ENCODE measurements at regions of chr2 and their contacts with region 1.

Region 1: DNA sequence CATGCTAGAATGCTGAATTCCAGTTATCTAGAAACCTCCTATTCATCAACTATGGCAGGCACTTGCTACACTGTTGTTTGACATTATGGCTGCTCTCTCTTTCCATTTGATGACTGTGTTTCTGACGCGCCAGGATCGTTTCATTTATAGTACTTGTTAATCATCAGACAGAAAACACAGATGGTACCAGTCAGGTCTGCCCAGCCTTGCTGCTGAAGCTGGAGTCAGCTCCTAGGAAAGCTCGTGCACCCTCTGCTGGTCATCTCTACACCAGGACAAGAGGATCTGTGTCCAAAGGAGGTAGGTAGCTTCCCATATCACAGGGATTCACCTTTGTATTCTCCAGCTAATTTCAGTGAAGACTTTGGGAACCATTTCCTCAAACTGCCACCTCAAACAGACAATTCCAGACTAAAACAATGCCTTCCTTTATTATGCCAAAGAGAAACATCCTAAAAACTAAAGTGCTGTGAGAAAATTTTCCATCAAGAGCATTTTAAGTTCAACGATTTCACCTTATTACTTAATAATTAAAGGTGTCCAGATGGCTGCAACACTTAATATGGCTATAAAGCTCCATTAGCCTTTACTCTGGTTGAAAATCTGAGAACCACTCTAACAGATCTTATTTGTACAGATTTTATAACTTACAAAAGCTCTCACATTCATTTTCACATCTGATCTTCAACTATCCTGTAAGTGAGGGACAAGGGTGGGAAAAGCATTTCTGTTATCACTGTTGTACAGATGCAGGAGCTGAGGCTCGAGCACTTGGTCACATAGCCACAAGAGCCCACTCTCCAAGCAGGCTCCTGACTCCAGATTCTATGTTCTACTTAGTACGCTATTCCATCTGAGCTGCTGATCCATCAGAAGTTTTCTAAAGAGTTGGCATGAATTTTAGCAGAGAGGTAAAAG is 17.5 kb downstream of the METTL8 start:
- DNase-seq: peak; percentile 74
- H3K4me3 ChIP-seq: peak overlapping the region; percentile 17 to 42; a peak in 3 of 4 replicates
- H3K27ac ChIP-seq: peak overlapping the region; percentile 56 to 82
- H3K4me1 ChIP-seq: peaks cover 0 to 17% of the 10 kb centered on the region in 2 experiments; a peak in 2 of 4 replicates
- H3K27me3 ChIP-seq: no peaks in the 10 kb centered on the region
- CTCF ChIP-seq: peak; percentile 91
- EP300 ChIP-seq: no peak
- RAD21 ChIP-seq: peak; percentile 94

Region 2: GRCh38 chr2:170966648-170967436 is 449.4 kb before region 1 on chr2:
- CTCF ChIA-PET with region 1: interaction called, 70 read pairs
- POLR2A ChIA-PET with region 1: interaction called, 9 read pairs
- DNase-seq: peak; percentile 65
- H3K4me3 ChIP-seq: no peak overlapping the region
- H3K27ac ChIP-seq: no peak overlapping the region
- H3K4me1 ChIP-seq: peaks cover 0 to 9% of the 10 kb centered on the region in 2 experiments; a peak in 1 of 4 replicates
- H3K27me3 ChIP-seq: no peaks in the 10 kb centered on the region
- CTCF ChIP-seq: peak; percentile 39; the same call in 1 of the 2 replicates
- EP300 ChIP-seq: no peak
- RAD21 ChIP-seq: no peak

Region 3: GRCh38 chr2:170973492-170974303 is 442.6 kb before region 1 on chr2:
- CTCF ChIA-PET with region 1: interaction called, 70 read pairs
- POLR2A ChIA-PET with region 1: interaction called, 9 read pairs
- DNase-seq: peak; percentile 99
- H3K4me3 ChIP-seq: peak overlapping the region; percentile 69 to 72
- H3K27ac ChIP-seq: peak overlapping the region; percentile 47 to 91; a peak in 3 of 4 replicates
- H3K4me1 ChIP-seq: peaks cover 5 to 14% of the 10 kb centered on the region in 2 experiments; a peak in 2 of 4 replicates
- H3K27me3 ChIP-seq: no peaks in the 10 kb centered on the region
- CTCF ChIP-seq: peak; percentile 85
- EP300 ChIP-seq: 0 out of 4 replicates have a peak, but pooled peaks of 1 of the 2 experiments have one; percentile 7
- RAD21 ChIP-seq: peak; percentile 85

Region 4: DNA sequence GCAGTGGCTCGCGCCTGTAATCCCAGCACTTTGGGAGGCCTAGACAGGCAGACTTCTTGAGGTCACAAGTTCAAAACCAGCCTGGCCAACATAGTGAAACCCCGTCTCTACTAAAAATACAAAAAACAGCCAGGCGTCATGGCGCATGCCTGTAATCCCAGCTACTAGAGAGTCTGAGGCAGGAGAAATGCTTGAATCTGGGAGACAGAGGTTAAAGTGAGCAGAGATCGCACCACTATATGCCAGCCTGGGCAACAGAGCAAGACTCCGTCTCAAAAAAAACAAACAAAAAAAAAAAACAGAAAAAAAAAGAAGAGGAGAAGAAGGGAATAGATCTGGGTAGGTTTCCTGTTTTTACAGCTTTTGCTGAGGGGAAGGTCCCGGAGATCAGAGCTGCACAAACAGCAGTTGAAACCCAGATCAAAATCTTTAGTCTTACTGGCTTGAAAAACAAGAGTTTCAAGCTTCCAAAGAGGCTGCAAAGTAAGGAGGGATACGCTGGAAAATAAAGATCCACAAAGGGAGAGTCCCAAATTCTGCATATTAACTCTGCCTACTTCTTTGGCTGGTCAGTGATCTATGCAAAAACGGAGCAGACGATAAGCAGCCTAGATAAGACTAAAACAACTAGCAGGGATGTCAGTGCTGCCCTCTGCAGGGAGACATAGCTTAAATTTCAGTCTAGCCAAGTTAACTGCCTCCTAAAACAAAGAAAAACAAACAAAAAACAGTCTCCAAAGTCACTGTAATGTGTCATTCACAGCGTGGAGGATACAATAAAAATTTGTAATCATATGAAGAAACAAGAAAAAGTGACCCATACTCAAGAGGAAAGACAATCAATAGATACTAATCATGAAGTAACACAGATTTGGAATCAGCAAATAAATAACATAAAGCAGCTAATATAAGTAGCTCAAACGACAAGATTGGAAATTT is 329.6 kb before region 1 on chr2:
- CTCF ChIA-PET with region 1: interaction called, 11 read pairs
- POLR2A ChIA-PET with region 1: no interaction called
- DNase-seq: peak; percentile 46
- H3K4me3 ChIP-seq: no peak overlapping the region
- H3K27ac ChIP-seq: no peak overlapping the region
- H3K4me1 ChIP-seq: peaks cover 0 to 4% of the 10 kb centered on the region in 2 experiments; a peak in 1 of 4 replicates
- H3K27me3 ChIP-seq: no peaks in the 10 kb centered on the region
- CTCF ChIP-seq: peak; percentile 69
- EP300 ChIP-seq: no peak
- RAD21 ChIP-seq: peak; percentile 46

Region 5: DNA sequence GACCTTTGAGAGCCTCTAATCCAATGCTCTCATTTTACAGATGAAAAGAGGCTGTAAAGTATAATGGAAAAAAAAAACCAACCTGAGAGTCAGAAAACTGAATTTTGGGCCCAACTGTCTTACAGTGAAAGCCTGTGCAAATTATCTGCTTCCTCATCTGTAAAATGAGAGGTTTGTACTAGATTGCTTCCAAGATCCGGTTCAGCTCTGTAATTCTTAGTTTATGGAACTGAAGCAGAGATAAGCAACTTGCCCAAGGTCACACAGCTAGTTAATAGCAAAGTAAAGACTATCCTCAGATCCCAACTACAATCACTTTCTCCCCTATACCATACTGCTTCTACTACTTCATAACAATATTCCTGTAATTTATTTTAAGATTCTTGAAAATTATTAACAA is 261.9 kb before region 1 on chr2:
- CTCF ChIA-PET with region 1: interaction called, 15 read pairs
- POLR2A ChIA-PET with region 1: interaction called, 4 read pairs
- DNase-seq: no peak
- H3K4me3 ChIP-seq: no peak overlapping the region
- H3K27ac ChIP-seq: peak overlapping the region in 1 of 2 experiments; percentile 16; a peak in 1 of 4 replicates
- H3K4me1 ChIP-seq: peaks cover 4 to 22% of the 10 kb centered on the region in 2 experiments; a peak in 3 of 4 replicates
- H3K27me3 ChIP-seq: no peaks in the 10 kb centered on the region
- CTCF ChIP-seq: no peak
- EP300 ChIP-seq: no peak
- RAD21 ChIP-seq: no peak

Region 6: DNA sequence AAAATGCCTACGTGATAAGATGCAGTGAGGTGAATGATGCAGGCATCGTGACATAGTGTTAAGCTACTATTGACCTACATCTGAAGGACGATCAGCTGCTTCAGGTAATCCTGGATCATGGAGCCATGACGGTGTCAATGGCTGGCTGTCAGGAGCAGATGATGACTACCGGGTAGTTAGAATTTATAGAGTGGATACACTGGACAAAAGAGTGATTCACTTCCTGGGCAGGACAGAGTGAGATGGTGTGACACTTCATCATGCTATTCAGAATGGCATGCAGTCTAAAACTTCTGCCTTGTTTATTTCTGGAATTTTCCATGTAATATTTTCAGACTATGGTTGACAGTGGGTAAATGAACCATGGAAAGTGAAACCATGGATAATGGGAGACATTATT is 12.0 kb before region 1 on chr2:
- CTCF ChIA-PET with region 1: interaction called, 10 read pairs
- POLR2A ChIA-PET with region 1: no interaction called
- DNase-seq: no peak
- H3K4me3 ChIP-seq: no peak overlapping the region
- H3K27ac ChIP-seq: peak overlapping the region in 1 of 2 experiments; percentile 67; a peak in 1 of 4 replicates
- H3K4me1 ChIP-seq: peaks cover 0 to 9% of the 10 kb centered on the region in 2 experiments; a peak in 1 of 4 replicates
- H3K27me3 ChIP-seq: no peaks in the 10 kb centered on the region
- CTCF ChIP-seq: no peak
- EP300 ChIP-seq: no peak; a peak in 1 of 4 replicates
- RAD21 ChIP-seq: no peak

Region 7: GRCh38 chr2:171433763-171434670 is 17.7 kb after region 1 on chr2 and contains the starts of genes DCAF17 and METTL8:
- CTCF ChIA-PET with region 1: interaction called, 11 read pairs
- POLR2A ChIA-PET with region 1: interaction called, 4 read pairs
- DNase-seq: peak; percentile 95
- H3K4me3 ChIP-seq: peak within 1 kb of the TSS; percentile 88 to 90
- H3K27ac ChIP-seq: peak within 1 kb of the TSS; percentile 92 to 98
- H3K4me1 ChIP-seq: peaks cover 0 to 10% of the 10 kb centered on the region in 2 experiments; a peak in 2 of 4 replicates
- H3K27me3 ChIP-seq: no peaks in the 10 kb centered on the region
- CTCF ChIP-seq: peak; percentile 40
- EP300 ChIP-seq: no peak
- RAD21 ChIP-seq: no peak
- polyA plus RNA-seq, gene DCAF17: 4.9 and 7.5 TPM in 2 replicates
- polyA plus RNA-seq, gene METTL8: 5.1 and 6.2 TPM in 2 replicates